Testis (tissue), 5 donors: ENCODE measurements at regions of chr4 and their contacts with region 1.

Region 1: GRCh38 chr4:183130328-183131173 is 31.5 kb downstream of the WWC2 start:
- DNase-seq: peak; percentile 57
- H3K4me3 ChIP-seq: no peak overlapping the region
- H3K27ac ChIP-seq: no peak overlapping the region
- H3K4me1 ChIP-seq: peaks cover 6% of the 10 kb centered on the region
- H3K27me3 ChIP-seq: no peaks in the 10 kb centered on the region
- CTCF ChIP-seq: no peak
- POLR2A ChIP-seq: no peak

Region 2: DNA sequence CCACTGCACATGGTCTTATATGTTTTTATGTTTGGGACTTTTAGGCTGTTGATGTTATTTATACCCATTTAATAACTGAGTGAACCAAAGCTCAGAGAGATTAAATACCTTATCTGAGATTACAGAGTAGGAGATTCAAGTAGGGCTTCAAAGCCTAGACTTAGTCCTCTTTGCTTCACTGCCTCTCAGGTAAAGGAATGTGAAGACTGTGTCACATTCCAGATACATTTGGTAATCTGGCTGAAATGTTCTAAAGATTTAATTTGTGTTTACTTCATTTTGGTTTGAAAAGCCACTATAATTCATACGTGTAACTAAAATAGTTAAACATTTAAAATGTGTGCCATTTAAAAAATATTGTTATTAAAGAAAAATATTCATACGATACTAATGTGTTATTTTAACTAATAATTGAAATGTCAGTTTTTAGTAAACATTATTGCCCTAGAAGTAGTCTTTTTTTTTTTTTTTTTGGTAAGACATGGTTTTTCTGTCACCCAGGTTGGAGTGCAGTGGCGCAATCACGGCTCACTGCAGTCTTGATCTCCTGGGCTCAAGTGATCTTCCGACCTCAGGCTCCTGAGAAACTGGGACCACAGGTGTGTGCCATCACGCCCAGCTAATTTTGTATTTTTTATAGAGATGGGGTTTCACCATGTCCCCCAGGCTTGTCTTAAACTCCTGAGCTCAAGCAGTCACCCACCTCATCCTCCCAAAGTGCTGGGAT is 22.8 kb after region 1 on chr4:
- intact Hi-C with region 1: loop called (anchors 1 kb)
- DNase-seq: no peak
- H3K4me3 ChIP-seq: no peak overlapping the region
- H3K27ac ChIP-seq: no peak overlapping the region
- H3K4me1 ChIP-seq: no peaks in the 10 kb centered on the region
- H3K27me3 ChIP-seq: no peaks in the 10 kb centered on the region
- CTCF ChIP-seq: no peak
- POLR2A ChIP-seq: no peak

Region 3: GRCh38 chr4:183185018-183185417 is 54.5 kb after region 1 on chr4:
- intact Hi-C with region 1: no loop called
- DNase-seq: no peak
- H3K4me3 ChIP-seq: no peak overlapping the region
- H3K27ac ChIP-seq: no peak overlapping the region
- H3K4me1 ChIP-seq: no peaks in the 10 kb centered on the region
- H3K27me3 ChIP-seq: no peaks in the 10 kb centered on the region
- CTCF ChIP-seq: no peak
- POLR2A ChIP-seq: no peak

Region 4: GRCh38 chr4:183422967-183423631 is 292.5 kb after region 1 on chr4:
- intact Hi-C with region 1: no loop called
- DNase-seq: no peak
- H3K4me3 ChIP-seq: no peak overlapping the region
- H3K27ac ChIP-seq: no peak overlapping the region
- H3K4me1 ChIP-seq: no peaks in the 10 kb centered on the region
- H3K27me3 ChIP-seq: no peaks in the 10 kb centered on the region
- CTCF ChIP-seq: no peak
- POLR2A ChIP-seq: no peak